WTC11 (cell line): ENCODE measurements at regions of chr4 and their contacts with region 1.

Region 1: DNA sequence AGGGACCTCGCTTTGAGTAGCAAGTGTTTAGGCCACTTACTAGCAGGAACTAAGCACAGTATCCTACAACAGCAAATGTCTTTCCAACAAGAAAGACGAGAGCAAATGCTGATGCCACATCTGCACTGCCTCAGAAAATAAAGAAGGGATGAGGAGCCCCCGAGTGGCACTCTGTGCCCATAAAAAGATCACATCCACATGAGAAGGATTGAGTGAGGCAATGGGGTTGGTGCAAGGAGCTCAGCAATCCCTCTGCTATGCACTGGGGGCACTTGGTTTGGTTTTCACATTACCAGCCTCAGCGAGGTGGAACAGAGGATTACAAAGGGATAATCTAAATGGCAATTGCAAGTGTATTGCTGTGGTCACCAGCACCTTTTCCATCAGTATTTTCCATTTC is 252.8 kb upstream of the SLC7A11 start:
- DNase-seq: peak; percentile 51
- ATAC-seq: peak; percentile 100
- H3K4me3 Mint-ChIP-seq: no peak overlapping the region
- H3K27ac Mint-ChIP-seq: no peak overlapping the region
- H3K4me1 Mint-ChIP-seq: peaks cover 18% of the 10 kb centered on the region
- H3K27me3 Mint-ChIP-seq: no peaks in the 10 kb centered on the region; the same call in 1 of the 2 replicates
- CTCF ChIP-seq: no peak

Region 2: GRCh38 chr4:138053641-138054301 is 441.2 kb before region 1 on chr4:
- CTCF ChIA-PET with region 1: no interaction called
- POLR2A ChIA-PET with region 1: no interaction called
- DNase-seq: no peak
- ATAC-seq: peak; percentile 28; the same call in 1 of the 2 replicates
- H3K4me3 Mint-ChIP-seq: no peak overlapping the region
- H3K27ac Mint-ChIP-seq: no peak overlapping the region
- H3K4me1 Mint-ChIP-seq: peaks cover 22% of the 10 kb centered on the region
- H3K27me3 Mint-ChIP-seq: no peaks in the 10 kb centered on the region
- CTCF ChIP-seq: no peak

Region 3: DNA sequence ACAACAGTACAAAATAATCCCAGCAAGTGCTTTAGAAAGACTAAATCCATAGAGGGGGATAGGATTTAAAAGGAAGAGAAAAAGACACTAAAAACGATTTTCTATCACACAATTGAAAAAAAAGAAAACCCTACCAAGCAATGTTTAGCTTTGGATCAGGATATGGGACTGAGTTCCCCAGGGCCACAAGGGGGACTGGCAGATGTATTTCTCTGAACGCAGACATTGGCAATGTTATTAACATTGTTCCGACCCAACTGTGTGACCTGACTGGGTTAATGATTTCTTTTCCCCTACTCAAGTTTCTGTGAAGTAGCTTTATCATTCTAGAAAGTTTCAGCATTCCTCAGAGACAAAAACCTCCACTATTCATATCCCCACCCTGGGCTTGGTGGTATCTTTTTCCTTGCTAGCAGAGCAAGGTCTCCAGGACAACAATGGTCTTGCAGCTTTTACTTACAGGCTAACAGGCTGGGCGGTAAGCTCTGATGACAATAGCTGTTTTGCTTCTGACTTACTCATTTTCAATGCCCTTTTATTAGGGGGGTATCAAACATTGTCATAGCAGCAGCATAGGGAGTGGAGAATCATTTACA is 278.6 kb before region 1 on chr4:
- CTCF ChIA-PET with region 1: interaction called, 18 read pairs
- POLR2A ChIA-PET with region 1: no interaction called
- DNase-seq: no peak
- ATAC-seq: peak; percentile 84
- H3K4me3 Mint-ChIP-seq: no peak overlapping the region
- H3K27ac Mint-ChIP-seq: peak overlapping the region; percentile 69
- H3K4me1 Mint-ChIP-seq: peaks cover 34% of the 10 kb centered on the region
- H3K27me3 Mint-ChIP-seq: no peaks in the 10 kb centered on the region
- CTCF ChIP-seq: no peak

Region 4: GRCh38 chr4:138507522-138507921 is 12.6 kb after region 1 on chr4:
- CTCF ChIA-PET with region 1: no interaction called
- POLR2A ChIA-PET with region 1: no interaction called
- DNase-seq: no peak
- ATAC-seq: no peak
- H3K4me3 Mint-ChIP-seq: no peak overlapping the region
- H3K27ac Mint-ChIP-seq: no peak overlapping the region
- H3K4me1 Mint-ChIP-seq: no peaks in the 10 kb centered on the region
- H3K27me3 Mint-ChIP-seq: no peaks in the 10 kb centered on the region
- CTCF ChIP-seq: no peak

Region 5: GRCh38 chr4:138522366-138522765 is 27.4 kb after region 1 on chr4:
- CTCF ChIA-PET with region 1: interaction called, 18 read pairs
- POLR2A ChIA-PET with region 1: no interaction called
- DNase-seq: no peak
- ATAC-seq: peak; percentile 93
- H3K4me3 Mint-ChIP-seq: no peak overlapping the region
- H3K27ac Mint-ChIP-seq: no peak overlapping the region
- H3K4me1 Mint-ChIP-seq: no peaks in the 10 kb centered on the region
- H3K27me3 Mint-ChIP-seq: no peaks in the 10 kb centered on the region; the same call in 1 of the 2 replicates
- CTCF ChIP-seq: peak; percentile 34; the same call in 1 of the 2 replicates